ENCODE measurements at regions of chr15 and their contacts with region 1.

Region 1: GRCh38 chr15:66862878-66863335 is 160.9 kb downstream of the SMAD6 start:
- DNase-seq: peak; percentile 84
- H3K4me3 Mint-ChIP-seq: no peak overlapping the region
- H3K27ac Mint-ChIP-seq: no peak overlapping the region
- H3K4me1 Mint-ChIP-seq: peaks cover 20% of the 10 kb centered on the region
- H3K27me3 Mint-ChIP-seq: no peaks in the 10 kb centered on the region
- CTCF ChIP-seq: peak; percentile 86

Region 2: GRCh38 chr15:66841953-66842681 is 20.8 kb before region 1 on chr15:
- CTCF ChIA-PET with region 1: interaction called, 3 read pairs
- POLR2A ChIA-PET with region 1: no interaction called
- intact Hi-C with region 1: loop called (anchors 2 kb)
- DNase-seq: peak; percentile 75
- H3K4me3 Mint-ChIP-seq: peak overlapping the region; percentile 64
- H3K27ac Mint-ChIP-seq: peak overlapping the region; percentile 68
- H3K4me1 Mint-ChIP-seq: peaks cover 11% of the 10 kb centered on the region
- H3K27me3 Mint-ChIP-seq: no peaks in the 10 kb centered on the region
- CTCF ChIP-seq: no peak

Region 3: GRCh38 chr15:66907826-66908743 is 45.2 kb after region 1 on chr15:
- CTCF ChIA-PET with region 1: no interaction called
- POLR2A ChIA-PET with region 1: no interaction called
- intact Hi-C with region 1: loop called (anchors 1 kb)
- DNase-seq: no peak
- H3K4me3 Mint-ChIP-seq: no peak overlapping the region
- H3K27ac Mint-ChIP-seq: no peak overlapping the region
- H3K4me1 Mint-ChIP-seq: peaks cover 6% of the 10 kb centered on the region
- H3K27me3 Mint-ChIP-seq: no peaks in the 10 kb centered on the region
- CTCF ChIP-seq: no peak

Measured in MCF 10A (cell line).